Activated CD4-positive, alpha-beta T cell treated with anti-CD3 and anti-CD28 coated beads for 36 hours (primary cell): ENCODE measurements at regions of chr10 and their contacts with region 1.

Region 1: GRCh38 chr10:73865459-73866442 is 8.6 kb downstream of the CAMK2G start:
- DNase-seq: peak; percentile 73
- ATAC-seq: peak; percentile 88
- H3K4me3 Mint-ChIP-seq: peak overlapping the region; percentile 70
- H3K27ac Mint-ChIP-seq: peak overlapping the region; percentile 99
- H3K4me1 Mint-ChIP-seq: peaks cover 77% of the 10 kb centered on the region
- H3K27me3 Mint-ChIP-seq: no peaks in the 10 kb centered on the region

Region 2: GRCh38 chr10:73480158-73480557 is 385.6 kb before region 1 on chr10:
- CTCF ChIA-PET with region 1: no interaction called
- POLR2A ChIA-PET with region 1: no interaction called
- intact Hi-C with region 1: no loop called
- DNase-seq: no peak
- ATAC-seq: peak; percentile 81
- H3K4me3 Mint-ChIP-seq: no peak overlapping the region
- H3K27ac Mint-ChIP-seq: no peak overlapping the region
- H3K4me1 Mint-ChIP-seq: peaks cover 31% of the 10 kb centered on the region
- H3K27me3 Mint-ChIP-seq: no peaks in the 10 kb centered on the region

Region 3: DNA sequence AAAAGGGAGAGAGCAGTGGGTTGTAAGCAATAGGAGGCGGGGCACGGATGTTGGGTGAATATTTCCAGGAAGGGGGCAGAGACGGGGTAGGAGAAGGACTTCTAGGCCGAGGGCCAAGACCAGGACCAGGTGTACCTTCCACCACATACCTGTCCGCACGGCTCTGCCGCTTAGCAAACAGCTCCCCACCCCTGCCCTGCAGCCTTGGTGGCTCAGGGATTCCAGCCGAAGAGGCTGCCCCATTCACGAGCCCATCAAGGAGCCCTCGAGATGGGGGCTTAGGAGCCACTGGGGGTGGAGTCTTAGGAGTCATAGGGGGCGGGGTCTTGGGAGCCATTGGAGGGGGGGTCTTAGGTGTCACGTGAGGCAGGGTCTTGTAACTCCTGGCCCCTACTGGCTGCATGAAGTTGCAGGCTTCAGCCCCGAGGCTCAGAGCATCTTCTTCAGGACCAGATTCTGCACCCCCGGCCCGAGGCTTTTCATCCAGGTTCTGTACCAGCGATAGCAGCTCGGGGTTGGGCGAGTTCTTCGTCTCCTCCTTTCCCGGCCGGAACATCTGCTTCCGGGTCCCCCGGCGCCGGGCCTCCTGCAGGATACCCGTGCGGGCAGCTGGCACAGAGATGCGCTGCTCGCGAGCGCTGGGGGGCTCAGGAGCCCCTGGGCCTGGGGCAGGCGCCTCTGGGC is 218.4 kb before region 1 on chr10:
- CTCF ChIA-PET with region 1: no interaction called
- POLR2A ChIA-PET with region 1: no interaction called
- intact Hi-C with region 1: no loop called
- DNase-seq: peak; percentile 48
- ATAC-seq: no peak
- H3K4me3 Mint-ChIP-seq: peak overlapping the region; percentile 59
- H3K27ac Mint-ChIP-seq: no peak overlapping the region
- H3K4me1 Mint-ChIP-seq: peaks cover 21% of the 10 kb centered on the region
- H3K27me3 Mint-ChIP-seq: no peaks in the 10 kb centered on the region

Region 4: DNA sequence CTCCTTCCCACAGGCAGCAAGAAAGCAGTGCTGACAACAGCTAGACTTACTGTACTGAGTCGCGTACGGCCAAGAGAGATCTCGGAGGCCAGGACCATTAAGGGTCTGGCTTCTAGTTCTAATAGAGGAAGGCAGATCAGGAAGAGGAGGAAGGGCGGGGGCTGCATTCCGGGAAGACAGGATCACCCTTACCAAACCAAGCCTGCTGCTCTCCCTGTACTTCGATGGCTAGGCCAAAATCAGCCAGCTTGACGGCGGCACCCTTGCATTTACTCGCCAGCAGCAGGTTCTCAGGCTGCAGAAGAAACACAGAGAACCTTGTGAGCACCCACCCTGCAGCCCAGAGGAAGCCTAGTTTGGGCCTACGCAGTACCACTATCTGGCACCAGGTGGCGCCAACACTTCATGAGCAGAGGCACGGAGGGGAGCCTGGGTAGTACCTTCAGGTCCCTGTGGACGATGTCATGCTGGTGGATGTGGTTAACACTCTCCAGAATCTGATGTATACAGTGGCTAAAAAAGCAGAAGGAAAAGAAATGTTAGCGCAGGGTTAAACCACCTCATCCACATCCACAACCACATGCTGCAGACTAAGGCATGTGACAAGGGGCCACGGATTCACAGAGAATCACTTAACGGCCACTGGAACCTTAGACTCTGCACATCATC is 16.8 kb before region 1 on chr10:
- CTCF ChIA-PET with region 1: interaction called, 20 read pairs
- POLR2A ChIA-PET with region 1: interaction called, 3 read pairs
- intact Hi-C with region 1: no loop called
- DNase-seq: peak; percentile 95
- ATAC-seq: peak; percentile 99
- H3K4me3 Mint-ChIP-seq: no peak overlapping the region
- H3K27ac Mint-ChIP-seq: peak overlapping the region; percentile 85
- H3K4me1 Mint-ChIP-seq: peaks cover 7% of the 10 kb centered on the region
- H3K27me3 Mint-ChIP-seq: no peaks in the 10 kb centered on the region

Region 5: DNA sequence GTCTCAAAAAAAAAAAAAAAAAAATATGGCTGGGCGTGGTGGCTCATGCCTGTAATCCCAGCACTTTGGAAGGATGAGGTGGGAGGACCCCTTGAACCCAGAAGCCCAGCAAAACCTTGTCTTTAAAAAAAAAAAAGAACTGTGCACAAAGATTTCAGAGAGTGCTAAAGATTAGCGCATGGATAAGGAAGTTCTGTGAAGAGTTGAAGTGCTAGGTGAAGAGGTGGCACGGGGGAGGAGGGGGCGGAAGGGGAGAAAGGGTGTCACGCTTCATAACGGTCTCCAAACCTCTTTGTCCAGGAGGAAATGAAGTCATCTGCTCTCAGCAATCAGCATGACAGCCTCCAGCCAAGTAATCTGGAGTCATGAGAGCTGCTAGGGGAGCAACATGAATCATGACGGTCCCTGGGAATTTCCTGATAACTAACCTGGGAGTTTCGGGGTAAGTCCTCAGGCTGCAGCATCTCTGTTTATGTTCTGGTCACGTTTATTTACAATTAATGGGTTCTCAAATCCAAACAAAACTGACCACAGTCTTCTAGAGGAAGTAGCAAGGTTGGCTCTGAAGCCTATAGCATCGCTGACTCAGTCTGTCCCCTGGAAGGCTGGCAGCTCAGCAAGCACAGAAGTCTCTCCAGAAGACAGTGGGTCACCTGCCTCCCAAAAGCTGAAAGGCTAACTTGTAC is 43.2 kb after region 1 on chr10:
- CTCF ChIA-PET with region 1: no interaction called
- POLR2A ChIA-PET with region 1: no interaction called
- intact Hi-C with region 1: no loop called
- DNase-seq: peak; percentile 72
- ATAC-seq: peak; percentile 76
- H3K4me3 Mint-ChIP-seq: peak overlapping the region; percentile 44
- H3K27ac Mint-ChIP-seq: peak overlapping the region; percentile 6
- H3K4me1 Mint-ChIP-seq: peaks cover 36% of the 10 kb centered on the region
- H3K27me3 Mint-ChIP-seq: peaks cover 46% of the 10 kb centered on the region

Region 6: GRCh38 chr10:73965890-73966768 is 100.4 kb after region 1 on chr10:
- CTCF ChIA-PET with region 1: no interaction called
- POLR2A ChIA-PET with region 1: no interaction called
- intact Hi-C with region 1: no loop called
- DNase-seq: no peak
- ATAC-seq: no peak
- H3K4me3 Mint-ChIP-seq: no peak overlapping the region
- H3K27ac Mint-ChIP-seq: no peak overlapping the region
- H3K4me1 Mint-ChIP-seq: no peaks in the 10 kb centered on the region
- H3K27me3 Mint-ChIP-seq: no peaks in the 10 kb centered on the region